Naive thymus-derived CD4-positive, alpha-beta T cell (primary cell): ENCODE measurements at regions of chr7 and their contacts with region 1.

Region 1: GRCh38 chr7:30983042-30983913 is 19.5 kb downstream of the GHRHR start:
- DNase-seq: peak; percentile 23 to 75 (median 55)
- ATAC-seq: peak; percentile 78
- H3K4me3 ChIP-seq: no peak overlapping the region
- H3K4me3 Mint-ChIP-seq: peak overlapping the region in 6 of 10 donors; percentile 7 to 61 (median 44)
- H3K27ac ChIP-seq: no peak overlapping the region
- H3K27ac Mint-ChIP-seq: peak overlapping the region in 1 of 9 donors; percentile 56
- H3K4me1 ChIP-seq: no peaks in the 10 kb centered on the region
- H3K4me1 Mint-ChIP-seq: peaks cover 0 to 18% (median 11%) of the 10 kb centered on the region in 7 donors
- H3K27me3 ChIP-seq: no peaks in the 10 kb centered on the region
- H3K27me3 Mint-ChIP-seq: peaks cover 42 to 54% (median 48%) of the 10 kb centered on the region in 5 donors

Region 2: DNA sequence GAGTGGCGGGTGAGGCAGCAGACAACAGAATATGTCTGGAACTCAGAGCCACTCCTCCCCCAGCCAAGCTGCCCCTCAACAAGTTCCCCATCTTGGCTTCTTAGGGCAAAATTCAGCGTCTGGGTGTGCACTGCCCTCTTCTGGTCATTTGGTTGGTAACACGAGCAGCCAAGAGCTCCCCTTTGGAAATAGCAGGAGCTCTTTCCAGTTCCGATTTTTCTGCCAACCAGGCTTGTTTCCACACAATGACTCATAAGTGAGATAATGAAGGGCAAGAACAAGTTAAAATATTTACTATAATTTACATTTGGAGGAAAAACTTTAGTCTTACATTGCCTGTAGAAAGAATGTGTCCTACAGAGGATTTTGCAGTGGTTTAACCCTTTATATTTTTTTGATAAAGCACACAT is 139.4 kb after region 1 on chr7:
- CTCF ChIA-PET with region 1: interaction called, 9 read pairs
- POLR2A ChIA-PET with region 1: no interaction called
- intact Hi-C with region 1: loop called in 1 of 2 experiments (anchors 1 kb)
- DNase-seq: peak in 4 of 9 donors; percentile 5 to 31 (median 12)
- ATAC-seq: peak; percentile 59
- H3K4me3 ChIP-seq: no peak overlapping the region
- H3K4me3 Mint-ChIP-seq: no peak overlapping the region
- H3K27ac ChIP-seq: no peak overlapping the region
- H3K27ac Mint-ChIP-seq: no peak overlapping the region
- H3K4me1 ChIP-seq: no peaks in the 10 kb centered on the region
- H3K4me1 Mint-ChIP-seq: no peaks in the 10 kb centered on the region
- H3K27me3 ChIP-seq: no peaks in the 10 kb centered on the region
- H3K27me3 Mint-ChIP-seq: peaks cover 6 to 41% (median 13%) of the 10 kb centered on the region in 5 donors

Region 3: GRCh38 chr7:31327071-31327470 is 343.8 kb after region 1 on chr7:
- CTCF ChIA-PET with region 1: no interaction called
- POLR2A ChIA-PET with region 1: no interaction called
- intact Hi-C with region 1: no loop called
- DNase-seq: no peak
- ATAC-seq: no peak
- H3K4me3 ChIP-seq: no peak overlapping the region
- H3K4me3 Mint-ChIP-seq: no peak overlapping the region
- H3K27ac ChIP-seq: no peak overlapping the region
- H3K27ac Mint-ChIP-seq: no peak overlapping the region
- H3K4me1 ChIP-seq: no peaks in the 10 kb centered on the region
- H3K4me1 Mint-ChIP-seq: no peaks in the 10 kb centered on the region
- H3K27me3 ChIP-seq: no peaks in the 10 kb centered on the region
- H3K27me3 Mint-ChIP-seq: peaks cover 0 to 4% (median 4%) of the 10 kb centered on the region in 5 donors